Adrenal gland (tissue), 19 donors: ENCODE measurements at regions of chr14 and their contacts with region 1.

Region 1: DNA sequence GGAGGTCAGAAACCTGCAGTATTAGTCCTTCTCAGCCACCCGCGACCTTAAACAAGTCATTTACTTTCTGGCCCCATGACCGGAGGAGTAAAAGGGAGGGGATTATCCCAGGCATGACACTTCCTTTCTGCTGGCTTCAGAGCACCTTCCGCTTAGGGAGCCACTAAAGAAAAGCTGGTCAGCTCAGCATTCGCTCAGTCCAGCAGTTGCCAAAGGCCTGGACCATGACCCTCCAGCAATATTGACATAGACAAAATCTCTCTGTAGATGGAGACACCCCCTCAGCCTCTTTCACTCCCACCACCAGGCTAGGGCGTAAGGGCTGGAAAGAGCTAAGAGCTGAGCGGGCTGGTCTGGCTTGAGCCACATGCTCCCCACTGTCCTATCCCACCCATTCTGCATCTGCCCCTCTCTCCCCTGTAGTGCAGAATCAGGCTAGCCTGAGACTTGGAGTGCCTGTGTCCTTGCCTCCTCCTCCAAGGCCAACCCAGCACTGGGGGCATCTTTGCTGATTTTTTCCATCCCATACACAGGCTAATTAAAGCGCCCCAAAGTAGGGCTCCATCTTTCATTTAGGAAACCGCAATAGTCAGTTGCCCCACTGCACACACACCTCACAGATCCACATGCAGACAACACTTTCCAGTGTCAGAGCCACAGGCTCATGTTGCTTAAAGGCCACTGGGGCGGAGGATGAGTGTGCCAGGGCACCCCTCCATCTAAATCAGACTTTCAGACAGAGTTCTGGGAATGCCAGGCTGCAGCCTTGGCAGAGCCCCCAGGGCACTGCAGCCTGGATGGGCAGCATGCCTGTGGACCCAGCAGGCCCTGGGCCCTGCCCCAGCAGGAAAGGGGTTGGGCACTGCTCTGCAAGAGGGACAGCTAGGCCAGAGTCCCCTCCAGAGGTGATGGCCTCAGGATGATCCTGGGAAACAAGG is 3.9 kb upstream of the CPNE6 start:
- DNase-seq: no peak
- H3K4me3 ChIP-seq: no peak overlapping the region
- H3K27ac ChIP-seq: no peak overlapping the region
- H3K4me1 ChIP-seq: peaks cover 0 to 4% of the 10 kb centered on the region in 2 donors
- H3K27me3 ChIP-seq: no peaks in the 10 kb centered on the region
- CTCF ChIP-seq: no peak
- POLR2A ChIP-seq: no peak

Region 2: GRCh38 chr14:24159777-24160498 is 92.5 kb after region 1 on chr14:
- intact Hi-C with region 1: loop called in 1 of 2 experiments (anchors 10 kb)
- DNase-seq: no peak
- H3K4me3 ChIP-seq: no peak overlapping the region
- H3K27ac ChIP-seq: peak overlapping the region in 2 of 5 donors; percentile 86 to 95
- H3K4me1 ChIP-seq: peaks cover 9 to 36% of the 10 kb centered on the region in 2 donors
- H3K27me3 ChIP-seq: no peaks in the 10 kb centered on the region
- CTCF ChIP-seq: no peak
- POLR2A ChIP-seq: no peak

Region 3: DNA sequence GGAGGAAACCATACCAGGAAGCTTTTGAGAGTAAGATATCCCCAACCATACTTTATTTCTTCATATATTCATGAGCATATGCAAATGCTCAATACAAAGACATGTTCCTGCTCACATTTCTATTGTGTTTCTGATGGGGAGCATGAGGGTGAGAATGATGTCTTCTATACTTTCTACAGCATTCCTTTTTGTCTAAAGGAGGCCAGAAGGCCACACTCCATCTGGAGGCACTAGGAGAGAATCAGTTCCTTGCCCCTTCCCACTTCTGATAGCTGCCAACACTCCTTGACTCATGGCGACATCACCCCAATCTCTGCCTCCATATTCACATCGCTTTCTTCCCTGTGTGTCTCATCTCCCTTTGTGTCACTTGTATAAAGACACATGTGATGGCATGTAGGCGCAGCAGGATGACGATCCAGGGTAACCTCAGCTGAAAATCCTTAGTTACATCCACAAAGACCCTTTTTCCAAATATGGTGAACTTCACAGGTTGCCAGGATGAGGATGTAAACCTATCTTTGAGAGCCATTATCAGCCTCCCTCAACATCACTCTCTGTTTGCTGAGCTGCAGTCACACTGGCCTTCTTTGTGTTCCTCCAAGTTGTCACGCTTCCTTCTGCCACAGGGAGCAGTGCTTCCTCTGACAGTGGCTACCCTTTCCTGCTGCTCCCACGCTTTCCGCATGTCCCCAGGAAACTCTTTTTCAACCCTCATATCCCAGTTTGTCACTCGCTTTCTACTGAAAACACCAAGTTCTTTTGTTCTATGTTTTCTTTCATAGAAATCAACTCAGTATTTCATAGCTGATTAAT is 885.6 kb after region 1 on chr14:
- intact Hi-C with region 1: no loop called
- DNase-seq: no peak
- H3K4me3 ChIP-seq: no peak overlapping the region
- H3K27ac ChIP-seq: no peak overlapping the region
- H3K4me1 ChIP-seq: no peaks in the 10 kb centered on the region
- H3K27me3 ChIP-seq: peaks cover 5% of the 10 kb centered on the region
- CTCF ChIP-seq: peak in 1 of 6 experiments; percentile 11
- POLR2A ChIP-seq: no peak